ENCODE measurements at regions of chr1 and their contacts with region 1.

Region 1: DNA sequence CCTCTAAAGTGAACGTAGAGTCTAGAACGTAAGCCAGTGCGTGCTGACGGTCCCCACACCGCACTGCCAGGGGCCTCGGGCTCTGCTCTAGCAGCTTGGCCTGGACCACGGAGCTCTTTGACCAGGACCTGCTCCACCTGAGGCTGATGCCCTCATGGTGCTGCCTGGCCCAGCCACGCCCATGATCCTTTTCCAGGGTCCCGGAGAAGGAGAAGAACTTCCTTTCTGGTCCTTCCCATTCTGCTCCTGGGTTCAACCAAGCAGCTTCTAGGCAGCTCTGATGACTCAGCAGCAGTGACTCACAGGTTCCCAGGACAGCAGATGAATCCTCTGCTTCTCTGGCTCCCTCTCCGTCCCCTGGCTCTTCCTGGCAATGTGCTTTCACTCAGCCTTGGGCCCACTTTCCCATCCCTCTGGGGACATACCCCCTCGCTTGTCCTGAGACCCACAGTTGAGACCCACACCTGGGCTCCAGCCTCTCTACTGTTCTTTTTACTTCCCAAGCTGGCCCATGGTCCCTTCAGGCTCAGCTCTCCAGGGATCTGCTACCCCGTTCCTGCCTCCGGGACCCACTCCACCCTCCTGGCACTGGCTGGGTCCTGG is 246.3 kb upstream of the RAB4A start:
- DNase-seq: peak; percentile 73
- H3K4me3 ChIP-seq: no peak overlapping the region
- H3K27ac ChIP-seq: no peak overlapping the region
- H3K4me1 ChIP-seq: peaks cover 7% of the 10 kb centered on the region
- H3K27me3 ChIP-seq: no peaks in the 10 kb centered on the region
- CTCF ChIP-seq: peak in 1 of 2 donors; percentile 12

Region 2: GRCh38 chr1:228918335-228918734 is 106.3 kb before region 1 on chr1:
- CTCF ChIA-PET with region 1: no interaction called
- dilution Hi-C with region 1: loop called (anchors 5 kb)
- in situ Hi-C with region 1: no loop called
- intact Hi-C with region 1: no loop called
- DNase-seq: no peak
- H3K4me3 ChIP-seq: no peak overlapping the region
- H3K27ac ChIP-seq: no peak overlapping the region
- H3K4me1 ChIP-seq: no peaks in the 10 kb centered on the region
- H3K27me3 ChIP-seq: no peaks in the 10 kb centered on the region
- CTCF ChIP-seq: no peak

Region 3: DNA sequence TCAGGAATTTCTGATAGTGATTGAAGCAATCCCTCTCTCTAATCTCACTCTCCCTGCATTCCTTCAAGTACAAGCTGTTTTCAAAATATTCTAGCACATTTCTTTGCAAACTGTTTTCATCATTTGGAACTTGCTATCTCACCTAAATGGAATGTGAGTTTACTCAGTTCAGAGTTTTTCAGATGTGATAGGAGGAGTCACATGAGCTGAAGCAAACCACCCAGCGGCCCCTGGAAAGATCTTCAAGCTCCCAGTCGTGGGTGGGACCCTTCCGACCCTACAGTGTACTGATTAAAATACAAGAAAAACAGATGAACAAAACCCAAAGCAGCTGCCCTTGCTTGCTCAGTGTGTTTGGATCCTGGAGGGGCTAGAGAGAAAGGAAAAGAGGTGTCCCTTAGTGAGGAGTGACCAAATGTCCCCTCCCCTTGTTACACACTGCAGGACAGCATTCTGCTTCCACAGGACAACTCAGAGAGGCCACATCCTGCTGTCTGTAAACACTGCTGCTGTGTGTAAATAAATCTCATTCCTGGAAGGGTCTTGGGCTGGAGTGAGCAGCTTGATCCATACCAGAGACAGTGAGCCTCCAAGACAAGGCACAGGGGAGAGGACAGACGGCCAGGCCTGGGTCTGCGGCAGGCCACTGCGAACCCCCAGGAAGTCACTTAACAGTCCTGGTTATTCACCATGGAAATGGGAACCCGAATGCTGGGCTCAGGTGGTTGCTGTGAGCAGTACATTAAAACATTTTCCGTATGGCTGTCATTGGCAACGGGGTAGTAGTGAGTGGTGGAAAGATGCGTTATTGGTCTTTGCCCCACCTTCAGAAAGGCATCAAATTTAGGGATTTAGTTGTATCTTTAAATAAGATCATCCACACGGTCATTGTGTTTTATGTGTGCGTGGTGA is 60.2 kb before region 1 on chr1:
- CTCF ChIA-PET with region 1: no interaction called
- dilution Hi-C with region 1: loop called (anchors 5 kb)
- in situ Hi-C with region 1: no loop called
- intact Hi-C with region 1: no loop called
- DNase-seq: no peak
- H3K4me3 ChIP-seq: no peak overlapping the region
- H3K27ac ChIP-seq: no peak overlapping the region
- H3K4me1 ChIP-seq: no peaks in the 10 kb centered on the region
- H3K27me3 ChIP-seq: no peaks in the 10 kb centered on the region
- CTCF ChIP-seq: no peak

Region 4: DNA sequence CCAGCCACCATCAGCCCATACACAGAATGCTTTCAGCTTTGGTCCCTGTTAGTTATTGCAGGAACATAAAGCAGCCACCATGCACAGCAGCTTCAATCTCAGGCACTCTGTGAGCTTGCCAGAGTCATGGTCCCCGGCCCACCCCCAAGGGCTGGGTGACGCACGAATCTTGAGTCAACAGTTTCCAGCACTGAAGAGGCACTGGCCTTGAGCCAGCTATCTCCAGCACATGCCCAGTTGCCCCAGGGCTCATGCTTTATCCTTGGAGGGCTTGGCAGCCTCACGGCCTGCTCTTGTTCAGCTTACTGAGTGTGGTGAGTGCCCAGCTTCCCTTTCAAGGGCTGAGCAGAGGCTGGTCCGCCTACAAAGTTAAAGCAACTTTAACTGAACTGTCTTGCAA is 45.5 kb after region 1 on chr1:
- CTCF ChIA-PET with region 1: no interaction called
- dilution Hi-C with region 1: loop called (anchors 5 kb)
- in situ Hi-C with region 1: no loop called
- intact Hi-C with region 1: no loop called
- DNase-seq: peak; percentile 80
- H3K4me3 ChIP-seq: no peak overlapping the region
- H3K27ac ChIP-seq: no peak overlapping the region
- H3K4me1 ChIP-seq: peaks cover 8% of the 10 kb centered on the region
- H3K27me3 ChIP-seq: peaks cover 11% of the 10 kb centered on the region
- CTCF ChIP-seq: no peak